Activated CD8-positive, alpha-beta T cell treated with anti-CD3 and anti-CD28 coated beads for 36 hours (primary cell): ENCODE measurements at regions of chr2 and their contacts with region 1.

Region 1: DNA sequence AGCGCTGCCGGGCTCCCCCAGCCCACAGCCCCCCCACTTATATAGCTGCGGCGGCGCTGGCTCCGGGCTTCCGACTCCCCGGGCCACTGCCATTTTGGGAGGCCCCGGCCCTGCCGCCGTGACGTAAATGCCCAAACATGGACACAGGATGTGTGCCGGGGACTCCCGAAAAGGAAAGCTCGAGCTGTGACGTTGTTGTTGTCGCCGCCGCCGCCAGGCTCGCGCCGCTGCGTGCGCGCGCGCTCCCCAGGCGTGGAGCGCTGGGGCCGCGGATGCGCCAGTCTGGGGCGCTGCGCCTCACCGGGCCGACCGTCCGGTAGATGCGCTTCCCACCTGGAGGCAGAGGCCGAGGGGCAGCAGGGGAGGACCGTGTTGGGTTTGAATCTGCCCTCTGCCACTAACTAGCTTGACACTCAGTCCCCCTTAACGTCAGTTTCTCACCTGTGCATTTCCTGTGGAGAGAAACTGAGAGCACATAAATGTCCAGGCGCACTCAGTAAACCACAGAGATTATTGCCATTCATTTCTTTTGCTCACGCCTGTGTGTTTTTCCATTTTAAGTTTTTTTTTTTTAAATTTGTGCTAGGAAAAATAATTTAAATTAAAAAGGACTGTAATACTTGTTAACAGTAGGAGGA is at the start of gene EGR4:
- DNase-seq: peak; percentile 95
- ATAC-seq: peak; percentile 93
- H3K4me3 Mint-ChIP-seq: peak within 1 kb of the TSS; percentile 70
- H3K27ac Mint-ChIP-seq: no peak within 1 kb of the TSS
- H3K4me1 Mint-ChIP-seq: peaks cover 11% of the 10 kb centered on the region
- H3K27me3 Mint-ChIP-seq: peaks cover 63% of the 10 kb centered on the region
- CTCF ChIP-seq: no peak
- total RNA-seq, gene EGR4: 0.11 to 0.29 TPM

Region 2: GRCh38 chr2:73212448-73213176 is 81.0 kb before region 1 on chr2:
- CTCF ChIA-PET with region 1: interaction called, 24 read pairs
- POLR2A ChIA-PET with region 1: no interaction called
- intact Hi-C with region 1: no loop called
- DNase-seq: peak; percentile 89
- ATAC-seq: peak; percentile 78
- H3K4me3 Mint-ChIP-seq: peak overlapping the region; percentile 33
- H3K27ac Mint-ChIP-seq: no peak overlapping the region
- H3K4me1 Mint-ChIP-seq: peaks cover 29% of the 10 kb centered on the region
- H3K27me3 Mint-ChIP-seq: no peaks in the 10 kb centered on the region
- CTCF ChIP-seq: peak; percentile 90

Region 3: DNA sequence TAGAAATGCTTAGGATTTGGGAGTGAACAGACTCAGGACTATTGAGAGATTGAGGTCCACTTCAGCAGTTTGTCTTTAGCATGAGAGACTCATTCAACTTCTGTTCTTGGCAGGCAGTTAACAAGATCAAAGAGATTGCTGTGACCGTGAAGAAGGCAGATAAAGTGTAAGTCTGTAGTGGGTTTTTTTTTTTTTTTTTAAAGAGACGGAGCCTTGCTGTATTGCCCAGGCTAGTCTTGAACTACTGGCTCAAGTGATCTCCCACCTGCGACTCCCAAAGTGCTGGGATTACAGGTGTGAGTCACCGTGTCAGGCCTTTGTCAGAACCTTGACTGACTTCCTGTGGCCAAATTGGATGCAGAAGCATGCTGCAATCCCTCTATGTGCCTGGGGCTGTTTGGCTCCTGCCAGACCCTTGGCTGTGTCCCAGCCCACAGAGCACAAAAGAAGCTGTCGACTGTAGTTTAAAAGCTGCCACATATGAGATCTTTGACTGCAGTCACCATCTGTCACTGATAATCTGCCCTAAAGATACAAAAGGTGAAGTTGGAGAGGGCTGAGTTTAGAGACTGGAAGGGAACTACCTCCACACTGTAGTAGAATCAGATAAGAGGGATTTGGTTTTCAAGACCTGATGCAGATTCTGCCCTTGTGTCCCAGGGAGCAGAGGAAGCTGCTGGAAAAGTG is 49.6 kb before region 1 on chr2:
- CTCF ChIA-PET with region 1: interaction called, 11 read pairs
- POLR2A ChIA-PET with region 1: interaction called, 4 read pairs
- intact Hi-C with region 1: no loop called
- DNase-seq: no peak
- ATAC-seq: no peak
- H3K4me3 Mint-ChIP-seq: no peak overlapping the region
- H3K27ac Mint-ChIP-seq: peak overlapping the region; percentile 74
- H3K4me1 Mint-ChIP-seq: peaks cover 25% of the 10 kb centered on the region
- H3K27me3 Mint-ChIP-seq: no peaks in the 10 kb centered on the region
- CTCF ChIP-seq: no peak

Region 4: GRCh38 chr2:73253901-73254300 is 39.8 kb before region 1 on chr2:
- CTCF ChIA-PET with region 1: interaction called, 10 read pairs
- POLR2A ChIA-PET with region 1: interaction called, 5 read pairs
- intact Hi-C with region 1: no loop called
- DNase-seq: no peak
- ATAC-seq: no peak
- H3K4me3 Mint-ChIP-seq: no peak overlapping the region
- H3K27ac Mint-ChIP-seq: peak overlapping the region; percentile 49
- H3K4me1 Mint-ChIP-seq: peaks cover 3% of the 10 kb centered on the region
- H3K27me3 Mint-ChIP-seq: no peaks in the 10 kb centered on the region
- CTCF ChIP-seq: no peak

Region 5: DNA sequence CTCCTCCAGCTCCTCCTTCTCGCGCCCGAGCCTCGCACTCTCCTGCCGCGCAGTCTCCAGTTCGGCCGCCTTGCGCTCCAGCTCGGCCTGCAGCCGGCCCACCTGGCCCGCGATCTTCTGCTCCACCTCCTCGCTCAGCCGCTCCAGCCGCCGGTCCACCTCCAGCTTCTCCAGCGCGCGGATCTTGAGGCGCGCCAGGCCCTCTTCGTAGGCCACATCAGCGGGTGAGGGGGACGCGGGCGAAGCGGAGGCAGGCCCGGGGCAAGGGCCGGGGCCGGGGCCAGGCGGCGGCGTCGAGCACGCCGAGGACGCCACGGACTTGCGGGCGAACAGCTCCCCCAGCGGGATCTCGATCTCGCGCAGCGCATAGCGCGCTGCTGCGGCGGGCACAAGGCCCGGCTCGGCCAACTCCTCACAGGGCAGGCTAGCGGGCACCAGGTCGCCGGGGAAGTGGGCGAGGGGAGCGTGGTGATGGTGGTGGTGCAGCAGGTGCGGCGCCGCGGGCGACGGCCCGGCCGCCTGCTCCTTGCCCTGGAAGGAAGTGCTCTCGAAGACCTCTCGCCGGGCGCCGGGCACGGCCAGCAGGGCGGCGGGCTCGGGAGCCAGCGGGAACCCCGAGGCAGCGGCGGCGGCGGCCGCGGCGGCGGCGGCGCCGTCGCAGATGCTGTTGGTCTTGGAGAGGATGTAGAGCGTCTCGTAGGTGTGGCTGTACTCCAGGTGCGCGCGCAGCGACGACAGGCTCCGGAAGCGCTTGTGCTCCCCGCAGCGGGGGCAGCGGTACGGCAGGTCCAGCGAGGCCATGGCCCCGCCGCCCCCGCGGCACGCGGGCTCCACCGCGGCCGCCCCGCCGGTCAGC is 24.6 kb before region 1 on chr2:
- CTCF ChIA-PET with region 1: interaction called, 36 read pairs
- POLR2A ChIA-PET with region 1: interaction called, 3 read pairs
- intact Hi-C with region 1: no loop called
- DNase-seq: peak; percentile 84
- ATAC-seq: peak; percentile 96
- H3K4me3 Mint-ChIP-seq: peak overlapping the region; percentile 28
- H3K27ac Mint-ChIP-seq: no peak overlapping the region
- H3K4me1 Mint-ChIP-seq: peaks cover 26% of the 10 kb centered on the region
- H3K27me3 Mint-ChIP-seq: no peaks in the 10 kb centered on the region
- CTCF ChIP-seq: no peak

Region 6: DNA sequence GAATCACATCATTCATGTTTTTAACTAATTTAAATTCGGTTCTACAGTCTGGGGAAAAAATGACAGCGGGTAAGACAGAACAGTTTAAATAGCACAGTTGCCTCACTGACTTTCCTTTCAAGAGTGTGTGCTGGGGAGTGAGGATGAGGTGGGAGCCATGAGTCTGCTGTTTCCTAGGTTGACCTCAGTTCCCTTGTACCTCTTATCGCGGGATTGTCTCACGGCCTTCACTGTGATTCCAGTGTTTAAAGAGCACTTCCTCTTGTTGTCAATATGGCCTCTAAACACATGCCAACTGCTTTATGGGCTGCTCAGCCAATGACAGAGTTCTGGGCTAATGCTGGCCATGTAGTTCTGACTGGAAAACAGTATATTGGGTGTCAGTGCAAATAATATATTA is 50.3 kb after region 1 on chr2:
- CTCF ChIA-PET with region 1: no interaction called
- POLR2A ChIA-PET with region 1: no interaction called
- intact Hi-C with region 1: no loop called
- DNase-seq: no peak
- ATAC-seq: no peak
- H3K4me3 Mint-ChIP-seq: no peak overlapping the region
- H3K27ac Mint-ChIP-seq: no peak overlapping the region
- H3K4me1 Mint-ChIP-seq: no peaks in the 10 kb centered on the region
- H3K27me3 Mint-ChIP-seq: peaks cover 2% of the 10 kb centered on the region
- CTCF ChIP-seq: no peak

Region 7: GRCh38 chr2:73359915-73360697 is 66.5 kb after region 1 on chr2:
- CTCF ChIA-PET with region 1: interaction called, 16 read pairs
- POLR2A ChIA-PET with region 1: no interaction called
- intact Hi-C with region 1: no loop called
- DNase-seq: no peak
- ATAC-seq: no peak
- H3K4me3 Mint-ChIP-seq: no peak overlapping the region
- H3K27ac Mint-ChIP-seq: no peak overlapping the region
- H3K4me1 Mint-ChIP-seq: no peaks in the 10 kb centered on the region
- H3K27me3 Mint-ChIP-seq: peaks cover 5% of the 10 kb centered on the region
- CTCF ChIP-seq: peak; percentile 47

Region 8: GRCh38 chr2:73418343-73418742 is 124.7 kb after region 1 on chr2:
- CTCF ChIA-PET with region 1: interaction called, 13 read pairs
- POLR2A ChIA-PET with region 1: no interaction called
- intact Hi-C with region 1: no loop called
- DNase-seq: no peak
- ATAC-seq: no peak
- H3K4me3 Mint-ChIP-seq: no peak overlapping the region
- H3K27ac Mint-ChIP-seq: no peak overlapping the region
- H3K4me1 Mint-ChIP-seq: peaks cover 6% of the 10 kb centered on the region
- H3K27me3 Mint-ChIP-seq: no peaks in the 10 kb centered on the region
- CTCF ChIP-seq: no peak